Activated T-helper 1 cell treated with anti-CD3 and anti-CD28 coated beads, Interleukin-12 subunit alpha, Interleukin-12 subunit beta, Interleukin-2, Interleukin-4 antibody, amounts not matched to agents 30 ng/mL and 10 ng/mL and 1 ng/mL, durations not matched to agents 14 hours and 24 hours and 36 hours (primary cell): ENCODE measurements at regions of chr6 and their contacts with region 1.

Region 1: DNA sequence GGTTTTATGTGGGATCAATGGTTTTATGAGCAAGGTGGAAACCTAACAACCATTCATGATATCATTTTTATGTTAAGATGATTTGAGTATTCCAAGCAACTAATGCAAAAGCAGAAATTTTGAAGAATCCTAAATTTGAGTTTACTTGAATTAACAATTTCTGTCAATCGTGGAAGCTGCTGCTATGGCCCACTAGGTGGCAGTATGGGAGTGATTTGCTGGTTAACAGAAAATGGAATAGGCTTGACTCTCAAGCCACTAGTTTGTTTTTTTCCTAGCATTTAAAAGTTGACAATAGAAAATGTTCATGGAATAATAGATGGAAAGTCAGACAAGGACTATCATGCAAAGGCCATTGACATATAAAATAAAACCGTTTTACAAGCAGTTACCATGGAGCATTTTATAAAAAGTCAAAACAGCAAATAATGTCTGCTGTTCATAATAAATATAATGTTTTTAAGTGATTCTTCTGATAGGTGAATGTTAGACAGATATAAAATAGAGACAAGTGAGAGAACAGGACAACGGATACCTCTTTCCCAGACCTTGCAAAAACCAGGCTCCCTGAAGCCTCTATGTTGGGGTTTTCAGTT is 43.0 kb upstream of the TMEM200A start:
- DNase-seq: peak; percentile 26
- H3K4me3 Mint-ChIP-seq: no peak overlapping the region
- H3K27ac Mint-ChIP-seq: no peak overlapping the region
- H3K4me1 Mint-ChIP-seq: peaks cover 7% of the 10 kb centered on the region
- H3K27me3 Mint-ChIP-seq: peaks cover 11% of the 10 kb centered on the region

Region 2: DNA sequence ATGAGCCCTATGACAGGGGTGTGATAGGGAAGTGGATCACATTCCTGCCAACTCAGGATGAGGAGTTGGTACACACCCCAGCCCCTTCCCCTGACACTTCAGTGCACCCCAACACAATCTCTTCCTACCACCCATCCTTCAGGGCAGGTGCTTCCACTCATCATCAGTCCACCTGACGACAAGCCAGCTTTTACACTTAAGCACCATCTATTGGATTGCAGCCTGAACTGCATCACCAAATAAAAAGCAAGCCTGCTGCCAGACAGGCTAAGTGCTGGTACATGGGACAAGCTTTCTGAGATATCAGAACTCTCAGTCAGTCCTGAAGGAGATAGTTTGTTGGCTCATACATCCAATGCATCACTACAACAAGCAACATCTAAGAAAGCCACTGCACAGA is 25.9 kb before region 1 on chr6:
- intact Hi-C with region 1: no loop called
- DNase-seq: no peak
- H3K4me3 Mint-ChIP-seq: no peak overlapping the region
- H3K27ac Mint-ChIP-seq: no peak overlapping the region
- H3K4me1 Mint-ChIP-seq: no peaks in the 10 kb centered on the region
- H3K27me3 Mint-ChIP-seq: peaks cover 16% of the 10 kb centered on the region

Region 3: GRCh38 chr6:130365166-130366106 is 42.7 kb after region 1 on chr6 and contains the start of gene TMEM200A:
- intact Hi-C with region 1: loop called (anchors 2 kb)
- DNase-seq: peak; percentile 41
- H3K4me3 Mint-ChIP-seq: peak within 1 kb of the TSS; percentile 78
- H3K27ac Mint-ChIP-seq: no peak within 1 kb of the TSS
- H3K4me1 Mint-ChIP-seq: peaks cover 25% of the 10 kb centered on the region
- H3K27me3 Mint-ChIP-seq: peaks cover 50% of the 10 kb centered on the region
- total RNA-seq, gene TMEM200A: 0.67 and 0.69 TPM in 2 replicates

Region 4: GRCh38 chr6:130760006-130760405 is 437.2 kb after region 1 on chr6:
- intact Hi-C with region 1: loop called (anchors 1 kb)
- DNase-seq: no peak
- H3K4me3 Mint-ChIP-seq: no peak overlapping the region
- H3K27ac Mint-ChIP-seq: no peak overlapping the region
- H3K4me1 Mint-ChIP-seq: peaks cover 6% of the 10 kb centered on the region
- H3K27me3 Mint-ChIP-seq: peaks cover 15% of the 10 kb centered on the region

Region 5: DNA sequence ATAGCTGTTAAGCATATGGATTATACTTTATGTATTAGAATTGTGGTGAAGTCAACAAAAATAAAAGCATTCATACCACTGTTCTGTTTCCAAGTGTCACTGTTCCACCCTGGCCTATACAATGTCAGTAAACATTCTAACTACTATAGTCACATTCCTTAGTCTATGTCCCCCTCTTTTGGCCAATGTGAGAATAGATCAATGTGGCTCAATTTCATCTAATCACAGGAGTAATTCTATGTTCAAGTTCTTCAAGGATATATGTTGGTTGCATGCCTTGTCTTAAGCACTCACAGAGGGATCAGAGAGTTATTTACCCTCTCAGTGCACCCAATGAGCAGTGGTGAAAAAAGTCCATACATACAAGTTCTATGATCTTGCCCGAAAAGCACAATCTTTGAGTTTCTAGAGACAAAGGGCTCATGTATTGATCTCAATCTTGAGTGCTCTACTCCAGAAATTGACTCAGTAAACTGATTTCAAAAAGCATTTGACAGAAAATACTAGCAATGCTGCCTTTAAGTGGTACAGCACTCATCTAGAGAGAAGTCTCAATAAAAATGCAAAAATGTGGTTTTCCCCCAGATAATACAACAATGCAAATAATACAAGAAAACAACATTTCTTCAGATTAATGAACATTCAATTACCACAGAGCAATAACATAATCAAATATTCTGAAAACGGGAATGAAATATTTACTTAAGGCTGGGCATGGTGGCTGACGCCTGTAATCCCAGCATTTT is 521.0 kb after region 1 on chr6:
- intact Hi-C with region 1: loop called (anchors 1 kb)
- DNase-seq: no peak
- H3K4me3 Mint-ChIP-seq: no peak overlapping the region
- H3K27ac Mint-ChIP-seq: no peak overlapping the region
- H3K4me1 Mint-ChIP-seq: peaks cover 8% of the 10 kb centered on the region
- H3K27me3 Mint-ChIP-seq: no peaks in the 10 kb centered on the region

Region 6: DNA sequence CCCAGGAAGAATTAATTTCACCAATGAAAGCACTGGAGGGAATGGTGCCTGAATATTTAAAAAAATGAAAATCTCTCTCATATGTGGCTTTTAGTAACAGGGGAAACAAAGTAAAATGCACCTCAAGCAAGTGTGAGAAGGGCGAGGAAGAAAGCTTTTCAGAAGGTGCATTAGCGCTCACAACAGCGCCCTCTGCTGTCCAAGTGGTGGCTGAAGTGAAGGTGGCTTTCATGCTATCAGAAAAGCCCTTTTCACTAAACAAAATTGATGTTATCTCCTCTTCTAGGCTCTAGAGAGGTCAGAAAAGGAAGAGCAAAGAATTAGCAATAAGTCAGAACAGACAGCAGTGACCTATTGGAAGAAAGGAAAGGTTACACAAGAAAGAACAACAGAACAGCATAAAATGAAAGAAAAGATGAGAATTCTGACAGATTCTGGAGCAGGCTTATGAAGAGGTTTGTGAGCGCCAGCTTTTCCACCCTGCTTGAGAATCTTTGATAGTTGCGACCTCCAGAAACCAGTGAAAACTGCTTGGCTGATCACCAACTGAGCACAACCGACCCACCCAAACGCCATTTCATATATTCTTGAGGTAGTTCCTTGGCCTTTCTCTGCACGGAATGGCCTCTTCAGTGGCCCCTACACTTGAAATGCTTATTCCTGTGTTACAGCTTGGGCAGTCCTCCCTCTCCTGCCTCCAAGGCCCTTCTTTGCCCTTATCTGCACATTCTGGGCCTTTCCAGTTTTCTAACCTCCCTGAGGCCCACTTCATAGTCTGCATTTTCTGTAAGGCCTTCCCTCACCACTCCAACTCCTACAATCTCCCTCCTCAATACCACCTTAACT is 549.7 kb after region 1 on chr6:
- intact Hi-C with region 1: loop called (anchors 1 kb)
- DNase-seq: peak; percentile 40
- H3K4me3 Mint-ChIP-seq: no peak overlapping the region
- H3K27ac Mint-ChIP-seq: no peak overlapping the region
- H3K4me1 Mint-ChIP-seq: peaks cover 4% of the 10 kb centered on the region
- H3K27me3 Mint-ChIP-seq: no peaks in the 10 kb centered on the region

Region 7: DNA sequence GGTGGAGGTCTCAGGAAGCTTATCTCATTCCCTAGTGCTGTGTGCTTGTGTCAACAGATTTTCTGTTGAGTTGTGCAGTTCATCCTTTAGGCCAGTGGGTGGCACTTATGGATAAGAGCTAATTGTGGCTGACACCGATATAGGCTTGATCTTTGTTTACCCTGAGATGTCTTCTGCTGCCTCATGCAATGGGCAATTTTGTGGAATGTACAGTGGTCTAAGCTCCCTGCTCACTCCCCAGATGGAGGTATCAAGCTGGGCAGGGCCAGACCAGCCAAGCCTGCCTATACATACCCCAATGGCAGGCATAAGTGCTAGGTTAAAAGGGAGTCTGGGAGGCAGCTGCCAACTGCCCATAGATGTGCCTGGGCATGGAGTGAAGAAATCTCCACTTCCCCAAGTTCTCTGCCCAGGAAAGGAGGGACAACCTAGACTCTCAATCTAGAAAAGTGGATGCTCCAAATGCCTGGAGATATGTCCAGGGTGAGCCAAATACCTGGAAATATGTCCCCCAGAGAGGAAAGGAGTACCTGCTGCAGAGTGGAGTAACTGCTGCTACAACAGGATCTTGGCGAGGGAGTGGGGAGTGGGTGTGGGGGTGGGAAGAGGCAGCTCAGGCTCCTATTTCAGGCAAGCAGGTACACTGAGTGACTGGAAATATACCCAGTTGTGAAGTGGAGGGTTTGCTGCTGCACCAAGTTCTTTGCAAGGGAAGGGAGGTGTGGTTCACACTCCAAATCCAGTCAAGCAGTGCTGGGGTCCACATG is 1197.1 kb after region 1 on chr6:
- intact Hi-C with region 1: loop called (anchors 2 kb)
- DNase-seq: peak; percentile 27
- H3K4me3 Mint-ChIP-seq: no peak overlapping the region
- H3K27ac Mint-ChIP-seq: no peak overlapping the region
- H3K4me1 Mint-ChIP-seq: peaks cover 14% of the 10 kb centered on the region
- H3K27me3 Mint-ChIP-seq: peaks cover 10% of the 10 kb centered on the region

Region 8: GRCh38 chr6:131627724-131628682 is 1305.2 kb after region 1 on chr6 and contains the start of gene MED23:
- intact Hi-C with region 1: no loop called
- DNase-seq: peak; percentile 92
- H3K4me3 Mint-ChIP-seq: peak within 1 kb of the TSS; percentile 99
- H3K27ac Mint-ChIP-seq: peak within 1 kb of the TSS; percentile 94
- H3K4me1 Mint-ChIP-seq: peaks cover 36% of the 10 kb centered on the region
- H3K27me3 Mint-ChIP-seq: no peaks in the 10 kb centered on the region
- total RNA-seq, gene MED23: 34.0 and 36.3 TPM in 2 replicates